ENCODE measurements at regions of chr14 and their contacts with region 1.

Region 1: GRCh38 chr14:56474419-56475022 is 105.1 kb upstream of the TMEM260 start:
- DNase-seq: no peak
- H3K4me3 ChIP-seq: no peak overlapping the region
- H3K27ac ChIP-seq: no peak overlapping the region
- H3K4me1 ChIP-seq: no peaks in the 10 kb centered on the region
- H3K27me3 ChIP-seq: no peaks in the 10 kb centered on the region
- CTCF ChIP-seq: peak in 3 of 4 experiments; percentile 54 to 80 (median 64)
- EP300 ChIP-seq: no peak
- POLR2A ChIP-seq: no peak

Region 2: GRCh38 chr14:55454264-55455002 is 1020.1 kb before region 1 on chr14:
- intact Hi-C with region 1: loop called (anchors 10 kb)
- DNase-seq: peak; percentile 77
- H3K4me3 ChIP-seq: peak overlapping the region in 2 of 4 donors; percentile 1 to 2
- H3K27ac ChIP-seq: peak overlapping the region in 3 of 4 donors; percentile 12 to 49 (median 14)
- H3K4me1 ChIP-seq: peaks cover 0 to 21% (median 15%) of the 10 kb centered on the region in 4 donors
- H3K27me3 ChIP-seq: no peaks in the 10 kb centered on the region
- CTCF ChIP-seq: no peak
- EP300 ChIP-seq: no peak
- POLR2A ChIP-seq: no peak

Region 3: GRCh38 chr14:56561606-56562005 is 87.1 kb after region 1 on chr14:
- intact Hi-C with region 1: no loop called
- DNase-seq: no peak
- H3K4me3 ChIP-seq: no peak overlapping the region
- H3K27ac ChIP-seq: no peak overlapping the region
- H3K4me1 ChIP-seq: no peaks in the 10 kb centered on the region
- H3K27me3 ChIP-seq: peaks cover 0 to 6% (median 0%) of the 10 kb centered on the region in 3 donors
- CTCF ChIP-seq: no peak
- EP300 ChIP-seq: no peak
- POLR2A ChIP-seq: no peak

Region 4: GRCh38 chr14:56694609-56695008 is 220.1 kb after region 1 on chr14:
- intact Hi-C with region 1: no loop called
- DNase-seq: no peak
- H3K4me3 ChIP-seq: no peak overlapping the region
- H3K27ac ChIP-seq: no peak overlapping the region
- H3K4me1 ChIP-seq: no peaks in the 10 kb centered on the region
- H3K27me3 ChIP-seq: no peaks in the 10 kb centered on the region
- CTCF ChIP-seq: no peak
- EP300 ChIP-seq: no peak
- POLR2A ChIP-seq: no peak

Measured in sigmoid colon (tissue), 7 donors.